Activated CD4-positive, alpha-beta T cell treated with anti-CD3 and anti-CD28 coated beads, Interleukin-2, amount 10 ng/mL, durations not matched to agents 24 days and 14 days (primary cell): ENCODE measurements at regions of chr12 and their contacts with region 1.

Region 1: GRCh38 chr12:57846577-57847319 is at the start of gene CTDSP2:
- DNase-seq: peak; percentile 97
- H3K4me3 Mint-ChIP-seq: peak within 1 kb of the TSS; percentile 83
- H3K27ac Mint-ChIP-seq: peak within 1 kb of the TSS; percentile 75
- H3K4me1 Mint-ChIP-seq: peaks cover 40% of the 10 kb centered on the region
- H3K27me3 Mint-ChIP-seq: peaks cover 21% of the 10 kb centered on the region
- total RNA-seq, gene CTDSP2: 81.4 and 82.7 TPM in 2 replicates

Region 2: GRCh38 chr12:57520053-57520871 is 326.5 kb before region 1 on chr12 and contains the start of gene DDIT3:
- intact Hi-C with region 1: loop called (anchors 5 kb)
- DNase-seq: peak; percentile 100
- H3K4me3 Mint-ChIP-seq: peak within 1 kb of the TSS; percentile 97
- H3K27ac Mint-ChIP-seq: peak within 1 kb of the TSS; percentile 100
- H3K4me1 Mint-ChIP-seq: peaks cover 56% of the 10 kb centered on the region
- H3K27me3 Mint-ChIP-seq: no peaks in the 10 kb centered on the region
- total RNA-seq, gene DDIT3: 15.3 and 16.7 TPM in 2 replicates

Region 3: DNA sequence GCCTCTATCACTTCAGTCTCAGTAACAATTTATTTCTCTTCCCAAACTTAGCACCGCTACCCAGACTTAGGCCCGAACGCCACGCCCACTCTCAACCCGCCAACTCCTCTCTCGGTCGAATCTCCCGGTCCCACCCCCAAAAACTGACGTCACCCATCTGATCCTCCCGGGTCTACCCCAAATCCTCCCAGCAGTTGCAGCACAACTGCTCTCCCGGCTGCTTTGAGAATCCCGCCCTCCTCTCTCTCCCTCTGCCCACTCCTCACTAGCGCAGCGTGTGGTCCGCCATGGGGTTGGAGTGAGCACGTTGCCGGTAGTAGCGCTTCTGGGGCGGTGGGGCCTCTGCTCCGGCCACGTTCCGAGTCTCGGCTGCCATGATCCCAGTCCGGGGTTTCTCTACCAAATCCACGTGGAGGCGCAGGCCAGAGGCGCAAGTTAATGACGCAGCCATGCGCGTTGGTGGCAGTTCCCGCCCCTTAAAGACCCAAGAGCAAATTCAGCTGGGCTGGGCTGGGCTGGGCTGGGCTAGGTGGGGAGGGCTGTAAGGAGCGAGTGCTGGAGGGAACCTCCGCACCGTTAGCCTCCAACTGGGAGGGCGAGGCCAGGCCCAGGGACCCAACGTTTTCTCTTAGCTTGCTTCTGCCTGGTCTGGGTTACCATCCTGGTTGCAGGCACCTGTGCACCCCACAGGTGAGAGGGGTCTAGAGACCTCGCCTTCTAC is 74.9 kb before region 1 on chr12 and contains the start of gene METTL1:
- intact Hi-C with region 1: loop called (anchors 2 kb)
- DNase-seq: peak; percentile 98
- H3K4me3 Mint-ChIP-seq: peak within 1 kb of the TSS; percentile 97
- H3K27ac Mint-ChIP-seq: peak within 1 kb of the TSS; percentile 99
- H3K4me1 Mint-ChIP-seq: peaks cover 21% of the 10 kb centered on the region
- H3K27me3 Mint-ChIP-seq: no peaks in the 10 kb centered on the region
- total RNA-seq, gene METTL1: 72.2 and 79.8 TPM in 2 replicates

Region 4: GRCh38 chr12:57830393-57830792 is 16.4 kb before region 1 on chr12:
- intact Hi-C with region 1: loop called (anchors 2 kb)
- DNase-seq: no peak
- H3K4me3 Mint-ChIP-seq: no peak overlapping the region
- H3K27ac Mint-ChIP-seq: peak overlapping the region; percentile 58
- H3K4me1 Mint-ChIP-seq: peaks cover 30% of the 10 kb centered on the region
- H3K27me3 Mint-ChIP-seq: no peaks in the 10 kb centered on the region

Region 5: GRCh38 chr12:57865090-57865751 is 18.5 kb after region 1 on chr12:
- intact Hi-C with region 1: loop called (anchors 1 kb)
- DNase-seq: peak; percentile 85
- H3K4me3 Mint-ChIP-seq: peak overlapping the region; percentile 77
- H3K27ac Mint-ChIP-seq: peak overlapping the region; percentile 71
- H3K4me1 Mint-ChIP-seq: peaks cover 9% of the 10 kb centered on the region
- H3K27me3 Mint-ChIP-seq: peaks cover 15% of the 10 kb centered on the region

Region 6: DNA sequence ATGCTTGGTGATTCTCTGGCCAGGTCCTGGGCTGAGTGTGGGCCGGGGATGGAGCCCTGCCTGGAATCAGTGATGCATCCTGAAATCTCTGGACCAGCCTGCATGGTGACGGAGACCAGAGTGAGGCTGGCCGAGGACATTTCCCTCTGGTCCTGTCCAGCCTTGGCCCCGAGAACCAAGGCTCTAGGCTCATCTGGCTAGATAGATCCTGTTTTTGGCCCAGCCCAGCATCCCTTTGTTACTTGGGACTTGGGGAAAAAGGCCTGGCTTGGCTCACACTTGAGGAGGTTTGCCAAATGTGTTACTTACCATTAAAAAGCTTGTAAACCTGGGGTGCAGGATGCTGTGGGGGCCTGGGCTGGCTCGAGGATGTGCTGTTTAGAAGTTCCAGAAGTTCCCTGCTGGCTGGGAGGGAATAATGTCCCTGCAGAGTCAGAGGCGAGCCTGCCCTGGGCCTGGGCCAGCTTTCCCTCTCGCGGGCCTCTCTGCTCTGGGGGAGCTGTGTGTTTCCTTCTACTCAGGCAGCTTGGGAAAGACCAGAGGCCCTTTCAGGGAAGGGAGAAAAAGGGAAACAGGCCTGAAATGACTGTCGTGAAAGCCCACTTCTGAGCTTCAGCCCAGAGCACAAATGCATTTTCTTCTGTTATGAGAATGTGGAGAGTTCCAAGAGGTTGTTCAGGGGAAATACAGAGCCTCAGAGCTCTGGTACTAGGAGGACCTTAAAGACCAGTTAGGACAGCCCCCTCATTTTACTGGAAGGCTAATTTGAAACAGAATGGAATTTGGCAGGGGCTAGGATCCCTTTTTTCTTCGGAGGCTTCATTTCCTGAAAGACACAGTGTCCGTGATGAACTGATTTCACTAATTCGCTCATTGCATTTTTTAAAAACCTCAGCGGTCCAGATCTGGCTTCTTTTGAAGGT is 46.9 kb after region 1 on chr12:
- intact Hi-C with region 1: no loop called
- DNase-seq: no peak
- H3K4me3 Mint-ChIP-seq: no peak overlapping the region
- H3K27ac Mint-ChIP-seq: no peak overlapping the region
- H3K4me1 Mint-ChIP-seq: peaks cover 38% of the 10 kb centered on the region
- H3K27me3 Mint-ChIP-seq: peaks cover 7% of the 10 kb centered on the region

Region 7: GRCh38 chr12:57904848-57905811 is 58.4 kb after region 1 on chr12:
- intact Hi-C with region 1: loop called (anchors 1 kb)
- DNase-seq: peak; percentile 95
- H3K4me3 Mint-ChIP-seq: peak overlapping the region; percentile 53
- H3K27ac Mint-ChIP-seq: peak overlapping the region; percentile 32
- H3K4me1 Mint-ChIP-seq: peaks cover 6% of the 10 kb centered on the region
- H3K27me3 Mint-ChIP-seq: peaks cover 35% of the 10 kb centered on the region

Region 8: DNA sequence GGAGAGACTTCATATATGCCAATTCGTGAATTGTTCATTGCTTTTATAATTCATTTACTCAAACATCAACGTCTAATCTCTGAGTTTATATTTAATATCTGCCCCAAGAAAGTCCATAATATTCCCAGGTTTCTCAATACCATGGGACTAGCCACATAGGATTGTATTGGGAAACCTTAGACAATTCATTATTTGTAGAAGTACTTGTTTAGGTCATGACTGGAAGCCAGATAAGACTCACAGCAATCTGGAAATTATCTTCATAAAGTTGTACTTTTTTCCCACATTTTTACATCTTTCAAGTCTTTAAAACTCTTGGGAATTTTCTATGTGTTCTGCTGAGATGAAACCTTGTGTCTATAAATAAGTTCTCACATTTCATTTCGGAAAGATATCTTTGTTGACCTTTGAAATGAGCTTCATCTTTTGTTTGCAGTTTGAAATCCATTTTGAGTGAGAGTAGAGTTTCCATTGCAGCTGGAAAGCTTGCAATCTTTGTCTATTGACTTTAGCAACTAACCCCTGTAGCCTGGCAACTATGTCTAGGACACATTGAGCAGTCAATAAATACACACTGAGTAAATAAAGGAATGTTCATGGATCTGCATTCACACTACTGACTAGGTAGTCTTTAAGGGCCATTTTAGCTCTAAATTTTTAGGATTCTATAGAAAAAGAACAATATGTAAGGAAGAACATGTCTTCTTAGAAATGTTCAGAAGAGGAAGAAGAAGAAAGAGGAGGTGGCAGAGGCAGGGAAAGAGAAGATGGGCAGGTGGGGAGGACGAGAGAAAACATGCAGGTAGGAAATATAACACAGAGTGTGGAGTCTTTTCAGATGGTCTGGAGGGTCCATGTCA is 919.1 kb after region 1 on chr12:
- intact Hi-C with region 1: no loop called
- DNase-seq: no peak
- H3K4me3 Mint-ChIP-seq: no peak overlapping the region
- H3K27ac Mint-ChIP-seq: no peak overlapping the region
- H3K4me1 Mint-ChIP-seq: no peaks in the 10 kb centered on the region
- H3K27me3 Mint-ChIP-seq: no peaks in the 10 kb centered on the region

Region 9: DNA sequence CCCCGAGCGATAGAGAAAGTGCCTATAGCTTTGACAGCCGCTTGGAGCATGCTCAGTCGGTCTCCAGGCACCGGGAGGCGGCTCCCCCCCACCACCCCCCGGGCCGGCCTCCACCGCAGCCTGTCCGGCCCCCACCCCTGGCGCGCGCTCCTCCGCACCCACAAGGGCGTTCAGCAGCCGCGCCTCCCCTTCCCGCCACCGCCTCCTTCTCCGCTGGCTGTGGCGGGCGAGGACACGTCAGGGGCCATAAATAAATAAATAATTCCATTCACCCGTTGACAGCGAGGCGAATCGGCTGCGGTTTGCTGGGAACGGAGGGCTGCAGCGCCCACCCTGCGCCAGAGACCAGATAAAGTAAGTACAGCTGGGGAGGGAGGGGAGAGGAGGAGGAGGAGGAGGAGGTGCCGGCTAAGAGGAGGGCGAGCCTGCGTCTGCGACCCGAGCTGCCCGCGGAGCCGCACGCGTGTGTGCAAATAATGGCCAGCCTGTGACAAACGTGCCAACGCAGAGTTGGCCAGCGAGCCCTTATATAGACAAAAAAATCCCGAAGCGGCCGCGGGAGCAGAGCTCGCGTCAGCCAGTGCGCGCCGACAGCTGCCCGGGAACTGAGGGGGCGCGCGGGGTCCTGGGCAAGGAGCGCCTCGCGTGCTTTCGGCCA is 1749.3 kb after region 1 on chr12 and contains the start of gene SLC16A7:
- intact Hi-C with region 1: loop called (anchors 10 kb)
- DNase-seq: peak; percentile 93
- H3K4me3 Mint-ChIP-seq: peak within 1 kb of the TSS; percentile 88
- H3K27ac Mint-ChIP-seq: peak within 1 kb of the TSS; percentile 100
- H3K4me1 Mint-ChIP-seq: peaks cover 42% of the 10 kb centered on the region
- H3K27me3 Mint-ChIP-seq: no peaks in the 10 kb centered on the region
- total RNA-seq, gene SLC16A7: 43.7 and 44.2 TPM in 2 replicates